ENCODE measurements at regions of chr9 and their contacts with region 1.

Region 1: DNA sequence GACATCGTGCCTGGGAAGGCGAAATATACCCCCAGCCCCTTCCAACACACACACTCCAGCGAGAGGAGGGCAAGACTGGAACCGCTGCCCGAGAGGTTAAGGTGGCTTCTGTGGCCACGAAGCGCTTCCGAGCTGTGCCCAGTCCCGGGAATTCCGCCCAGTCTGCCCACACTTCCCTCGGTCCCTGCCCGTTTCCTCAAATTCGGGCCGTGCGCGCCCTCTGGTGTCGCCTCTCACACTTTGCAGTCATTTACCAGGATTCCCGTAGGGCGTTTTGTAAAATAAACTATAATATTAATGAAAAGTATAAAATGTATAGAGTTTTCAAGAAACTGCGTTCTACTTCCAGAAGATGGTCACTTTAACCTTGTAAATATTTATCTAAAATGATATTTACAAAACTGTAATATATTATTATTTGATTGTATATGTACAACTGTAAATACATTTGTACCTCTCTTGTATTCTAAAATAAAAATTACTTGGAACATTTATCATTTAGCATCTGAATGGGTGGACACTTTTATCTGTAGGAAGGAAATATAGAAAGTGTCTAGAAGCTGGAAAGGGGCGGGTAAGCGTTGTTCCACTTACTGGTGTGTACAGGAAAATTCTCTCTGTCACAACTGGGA is 11.0 kb upstream of the EXOSC2 start:
- DNase-seq: peak; percentile 69 to 86 (median 79)
- ATAC-seq: peak; percentile 63 to 87 (median 78)
- H3K4me3 ChIP-seq: peak overlapping the region in 10 of 12 donors; percentile 44 to 64 (median 59)
- H3K27ac ChIP-seq: no peak overlapping the region
- H3K4me1 ChIP-seq: peaks cover 0 to 17% (median 11%) of the 10 kb centered on the region in 12 donors
- H3K27me3 ChIP-seq: peaks cover 0 to 13% (median 5%) of the 10 kb centered on the region in 9 donors
- CTCF ChIP-seq: peak; percentile 72 to 94 (median 82)
- POLR2A ChIP-seq: no peak

Region 2: DNA sequence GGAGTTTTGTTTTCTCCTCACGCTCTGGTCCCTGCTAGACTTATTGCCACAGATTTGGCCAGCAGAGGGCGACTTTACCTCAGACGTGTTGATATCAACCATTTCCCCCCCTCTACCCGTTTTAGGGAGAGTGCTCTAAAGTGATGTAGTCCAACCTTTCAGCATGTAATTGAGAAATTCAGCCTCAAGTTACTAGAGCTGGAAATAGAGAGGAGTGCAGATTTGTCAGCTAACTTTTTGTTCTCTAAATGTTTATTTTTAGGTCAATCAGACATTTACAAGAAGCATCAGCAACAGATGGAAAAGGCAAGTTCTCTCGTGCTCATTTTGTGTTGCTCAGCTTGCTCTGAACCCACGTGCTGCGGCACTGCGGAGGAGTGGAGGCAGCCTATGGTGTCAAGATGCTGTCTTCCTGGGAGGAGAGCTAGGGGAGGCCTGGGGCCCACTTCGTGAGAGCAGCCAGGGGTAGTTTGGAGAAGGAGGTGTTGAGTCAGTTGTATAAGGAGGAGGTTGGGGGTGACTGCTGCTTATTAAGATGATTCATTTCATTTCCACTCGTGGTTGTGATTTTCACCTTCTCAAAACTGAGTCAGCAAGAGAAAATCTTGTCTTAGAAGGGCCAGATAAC is 575.3 kb before region 1 on chr9:
- intact Hi-C with region 1: loop called in 3 of 10 experiments (anchors 5 to 10 kb)
- DNase-seq: peak; percentile 69 to 91 (median 79)
- ATAC-seq: peak in 3 of 4 donors; percentile 80 to 87 (median 86)
- H3K4me3 ChIP-seq: no peak overlapping the region
- H3K27ac ChIP-seq: peak overlapping the region in 1 of 12 donors; percentile 73
- H3K4me1 ChIP-seq: peaks cover 0 to 9% (median 0%) of the 10 kb centered on the region in 12 donors
- H3K27me3 ChIP-seq: no peaks in the 10 kb centered on the region
- CTCF ChIP-seq: peak; percentile 69 to 86 (median 80)
- POLR2A ChIP-seq: no peak

Region 3: GRCh38 chr9:130461218-130461630 is 221.4 kb before region 1 on chr9:
- intact Hi-C with region 1: loop called (anchors 1 to 2 kb)
- DNase-seq: peak; percentile 42 to 81 (median 48)
- ATAC-seq: peak; percentile 44 to 57 (median 50)
- H3K4me3 ChIP-seq: no peak overlapping the region
- H3K27ac ChIP-seq: no peak overlapping the region
- H3K4me1 ChIP-seq: peaks cover 0 to 28% (median 0%) of the 10 kb centered on the region in 12 donors
- H3K27me3 ChIP-seq: no peaks in the 10 kb centered on the region
- CTCF ChIP-seq: peak; percentile 86 to 99 (median 94)
- POLR2A ChIP-seq: no peak

Region 4: DNA sequence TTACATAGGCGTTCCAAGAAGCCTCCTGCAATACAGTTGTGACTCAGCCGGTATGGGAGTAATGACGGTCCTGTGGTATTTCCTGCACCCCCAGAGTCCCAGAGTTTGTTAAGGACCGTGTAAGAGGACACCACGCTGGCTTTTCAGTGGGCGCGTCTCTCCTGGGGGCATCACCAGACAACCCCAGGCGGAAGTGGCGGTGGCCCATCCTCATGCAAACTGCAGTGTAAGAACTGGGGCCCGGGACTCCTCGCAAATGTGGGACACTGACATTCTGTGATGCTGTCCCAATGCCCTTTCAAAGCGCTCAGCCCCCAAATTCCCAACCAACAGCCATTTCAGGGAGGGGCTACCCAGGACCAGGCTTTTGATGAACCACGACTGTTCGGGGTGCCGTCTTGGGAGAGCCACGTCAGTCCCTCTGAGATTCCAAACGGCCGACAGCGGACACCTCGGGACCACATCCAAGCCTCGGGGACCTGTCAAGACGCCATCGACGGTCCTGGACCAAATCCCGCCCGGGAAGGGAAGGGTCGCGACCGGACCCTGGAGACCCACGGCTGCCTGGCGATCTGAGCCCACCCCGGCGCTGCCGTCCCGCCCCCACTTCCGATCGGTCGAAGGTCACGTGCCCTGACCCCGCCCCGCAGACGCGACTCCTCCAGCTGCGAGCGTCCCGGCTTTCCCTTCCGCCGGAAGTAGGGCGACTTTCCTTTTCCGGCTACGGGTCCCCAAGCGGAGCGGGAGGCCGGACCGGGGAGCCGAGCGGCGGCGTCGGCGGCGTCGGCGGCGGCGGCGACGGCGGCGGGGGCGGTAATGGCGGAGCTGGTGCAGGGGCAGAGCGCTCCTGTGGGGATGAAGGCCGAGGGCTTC is 103.5 kb before region 1 on chr9 and contains the start of gene FUBP3:
- intact Hi-C with region 1: loop called in 2 of 10 experiments (anchors 10 kb)
- DNase-seq: peak; percentile 95 to 97 (median 96)
- ATAC-seq: peak; percentile 81 to 98 (median 96)
- H3K4me3 ChIP-seq: peak within 1 kb of the TSS; percentile 69 to 100 (median 90)
- H3K27ac ChIP-seq: peak within 1 kb of the TSS; percentile 70 to 98 (median 93)
- H3K4me1 ChIP-seq: peaks cover 10 to 58% (median 33%) of the 10 kb centered on the region in 12 donors
- H3K27me3 ChIP-seq: no peaks in the 10 kb centered on the region
- CTCF ChIP-seq: no peak
- POLR2A ChIP-seq: peak in 1 of 2 donors; percentile 82
- total RNA-seq, gene FUBP3: 17.5 to 39.5 (median 28.9) TPM

Region 5: DNA sequence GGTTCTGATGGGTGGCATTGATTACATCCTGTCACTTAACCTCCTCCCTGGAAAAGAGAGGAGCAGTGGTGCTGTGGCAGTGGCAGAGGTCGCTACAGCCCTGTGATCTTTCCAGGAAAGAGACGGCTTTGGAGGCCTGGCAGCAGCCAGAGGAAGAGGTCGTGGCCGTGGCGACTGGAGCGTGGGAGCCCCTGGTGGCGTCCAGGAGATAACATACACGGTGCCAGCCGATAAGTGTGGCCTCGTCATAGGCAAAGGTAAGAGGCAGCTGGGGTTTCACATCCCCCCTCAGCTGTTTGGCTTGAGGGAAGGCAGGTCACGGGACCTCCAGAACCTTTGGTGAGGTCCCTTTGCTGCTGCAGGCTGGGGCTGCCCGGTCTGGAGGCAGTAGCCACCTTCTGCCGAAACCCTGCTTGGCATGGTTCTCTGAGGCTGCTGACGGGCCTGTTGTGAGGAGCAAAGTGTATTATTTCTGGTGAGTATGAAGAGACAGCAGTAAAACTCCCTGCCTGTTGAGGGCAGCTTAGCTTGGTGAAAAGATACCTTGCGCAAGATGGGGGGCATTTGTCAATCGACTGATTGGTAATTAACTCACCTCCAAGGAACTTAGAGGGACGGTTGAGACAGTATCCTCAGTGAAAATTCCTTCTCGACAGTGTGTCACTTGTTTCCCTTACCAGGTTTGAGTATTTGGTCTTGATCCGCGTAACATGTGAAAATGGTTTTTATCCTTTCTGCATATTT is 56.2 kb before region 1 on chr9:
- intact Hi-C with region 1: loop called in 4 of 10 experiments (anchors 2 to 5 kb)
- DNase-seq: peak in 3 of 5 donors; percentile 35 to 61 (median 59)
- ATAC-seq: peak in 3 of 4 donors; percentile 37 to 44 (median 41)
- H3K4me3 ChIP-seq: no peak overlapping the region
- H3K27ac ChIP-seq: peak overlapping the region in 4 of 12 donors; percentile 3 to 42 (median 22)
- H3K4me1 ChIP-seq: peaks cover 0 to 51% (median 16%) of the 10 kb centered on the region in 12 donors
- H3K27me3 ChIP-seq: no peaks in the 10 kb centered on the region
- CTCF ChIP-seq: peak in 7 of 12 donors; percentile 7 to 38 (median 18)
- POLR2A ChIP-seq: no peak

Measured in heart left ventricle (tissue), 16 donors.